H1 (cell line): ENCODE measurements at regions of chr5 and their contacts with region 1.

Region 1: DNA sequence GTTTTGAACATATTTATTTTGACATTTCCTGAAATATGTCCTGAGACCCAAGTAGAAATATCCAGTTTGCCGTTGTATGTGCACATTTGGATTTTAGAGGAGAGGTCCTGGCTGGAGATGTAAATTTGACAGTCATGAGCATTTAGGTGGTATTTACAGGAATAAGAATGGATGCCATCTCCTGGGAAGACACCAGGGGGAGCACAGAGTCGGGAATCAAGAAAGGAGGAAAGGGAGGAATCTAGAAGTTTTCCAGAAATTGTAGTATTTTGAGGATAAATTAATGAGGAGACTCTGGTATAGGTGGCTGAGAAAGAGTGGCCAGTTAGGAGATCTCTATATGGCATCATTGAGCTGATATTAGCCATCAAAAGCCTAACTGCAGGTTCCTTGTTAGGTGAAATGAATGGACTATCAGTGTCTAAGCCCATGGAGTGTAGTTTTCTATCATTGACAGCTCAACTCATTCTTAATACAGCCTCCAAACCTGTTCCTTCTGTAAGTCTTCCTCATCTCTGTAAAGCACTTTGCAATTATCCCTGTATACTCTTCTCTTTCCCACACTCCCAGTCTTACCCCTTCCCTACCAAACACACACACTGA is 7.2 kb downstream of the GAPT start:
- DNase-seq: peak; percentile 10 to 66
- H3K4me3 ChIP-seq: no peak overlapping the region
- H3K27ac ChIP-seq: no peak overlapping the region
- H3K4me1 ChIP-seq: no peaks in the 10 kb centered on the region
- H3K27me3 ChIP-seq: peaks cover 0 to 1% (median 0%) of the 10 kb centered on the region in 4 experiments; a peak in 1 of 7 replicates
- CTCF ChIP-seq: peak in 2 of 3 experiments; percentile 61 to 72; a peak in 2 of 4 replicates
- EP300 ChIP-seq: no peak
- POLR2A ChIP-seq: no peak
- RAD21 ChIP-seq: peak; percentile 76

Region 2: GRCh38 chr5:58571501-58571900 is 73.1 kb after region 1 on chr5:
- CTCF ChIA-PET with region 1: interaction called, 10 read pairs
- POLR2A ChIA-PET with region 1: no interaction called
- DNase-seq: no peak
- H3K4me3 ChIP-seq: no peak overlapping the region
- H3K27ac ChIP-seq: no peak overlapping the region
- H3K4me1 ChIP-seq: no peaks in the 10 kb centered on the region
- H3K27me3 ChIP-seq: no peaks in the 10 kb centered on the region
- CTCF ChIP-seq: no peak
- EP300 ChIP-seq: no peak
- POLR2A ChIP-seq: no peak
- RAD21 ChIP-seq: no peak

Region 3: GRCh38 chr5:58818462-58818861 is 320.0 kb after region 1 on chr5:
- CTCF ChIA-PET with region 1: interaction called, 88 read pairs
- POLR2A ChIA-PET with region 1: no interaction called
- DNase-seq: no peak
- H3K4me3 ChIP-seq: no peak overlapping the region
- H3K27ac ChIP-seq: no peak overlapping the region
- H3K4me1 ChIP-seq: no peaks in the 10 kb centered on the region
- H3K27me3 ChIP-seq: no peaks in the 10 kb centered on the region
- CTCF ChIP-seq: no peak
- EP300 ChIP-seq: no peak
- POLR2A ChIP-seq: no peak
- RAD21 ChIP-seq: no peak

Region 4: GRCh38 chr5:58834242-58835225 is 336.1 kb after region 1 on chr5:
- CTCF ChIA-PET with region 1: interaction called, 19 read pairs
- POLR2A ChIA-PET with region 1: no interaction called
- DNase-seq: no peak
- H3K4me3 ChIP-seq: no peak overlapping the region
- H3K27ac ChIP-seq: no peak overlapping the region
- H3K4me1 ChIP-seq: no peaks in the 10 kb centered on the region
- H3K27me3 ChIP-seq: no peaks in the 10 kb centered on the region
- CTCF ChIP-seq: no peak
- EP300 ChIP-seq: no peak
- POLR2A ChIP-seq: no peak
- RAD21 ChIP-seq: no peak

Region 5: DNA sequence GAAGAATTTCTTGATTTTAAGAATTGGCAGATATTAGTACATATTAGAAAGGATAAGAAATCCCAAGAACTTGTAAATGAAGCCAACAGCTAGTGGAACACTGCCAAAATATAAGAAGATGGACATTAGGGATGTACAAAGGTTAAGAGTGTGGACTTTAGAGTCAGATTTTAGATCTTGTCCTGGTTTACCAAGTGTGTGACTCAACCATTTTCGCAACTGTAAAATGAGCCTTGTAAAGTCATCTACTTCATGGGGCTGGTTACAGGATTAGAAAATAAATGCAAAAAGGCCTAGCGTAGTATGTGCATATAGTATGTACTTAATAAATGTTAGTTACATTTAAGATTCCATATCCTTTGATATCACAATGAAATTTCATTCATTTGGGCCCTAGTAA is 344.4 kb after region 1 on chr5:
- CTCF ChIA-PET with region 1: interaction called, 201 read pairs
- POLR2A ChIA-PET with region 1: no interaction called
- DNase-seq: no peak
- H3K4me3 ChIP-seq: no peak overlapping the region
- H3K27ac ChIP-seq: no peak overlapping the region
- H3K4me1 ChIP-seq: no peaks in the 10 kb centered on the region
- H3K27me3 ChIP-seq: no peaks in the 10 kb centered on the region
- CTCF ChIP-seq: no peak
- EP300 ChIP-seq: no peak
- POLR2A ChIP-seq: no peak
- RAD21 ChIP-seq: no peak